Mammary epithelial cell (primary cell): ENCODE measurements at regions of chr1 and their contacts with region 1.

Region 1: GRCh38 chr1:178542560-178543356 is 29.8 kb downstream of the TEX35 start:
- DNase-seq: peak; percentile 76
- H3K4me3 ChIP-seq: peak overlapping the region; percentile 49 to 85 (median 71)
- H3K27ac ChIP-seq: peak overlapping the region; percentile 17
- H3K4me1 ChIP-seq: peaks cover 20% of the 10 kb centered on the region
- H3K27me3 ChIP-seq: no peaks in the 10 kb centered on the region
- CTCF ChIP-seq: peak; percentile 73 to 90

Region 2: DNA sequence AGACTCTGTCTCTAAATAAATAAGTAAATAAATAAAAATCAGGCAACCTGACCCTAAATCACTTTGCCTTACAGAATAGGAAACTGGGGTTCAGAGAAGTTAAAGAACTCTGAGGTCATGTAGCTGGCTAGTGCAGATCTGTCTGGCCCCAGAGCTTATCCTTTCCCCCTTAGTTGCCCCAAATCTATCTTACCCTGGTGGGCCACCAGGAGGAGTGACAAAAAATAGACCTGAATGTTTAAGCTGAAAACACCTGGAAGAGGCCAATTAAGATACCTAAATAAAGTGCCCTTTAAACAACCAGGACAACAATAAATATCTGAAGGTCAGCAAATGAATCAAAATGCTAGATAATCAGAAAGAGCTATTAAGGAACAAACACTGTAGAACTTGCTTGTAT is 29.8 kb after region 1 on chr1:
- CTCF ChIA-PET with region 1: interaction called, 12 read pairs
- dilution Hi-C with region 1: no loop called
- in situ Hi-C with region 1: no loop called
- intact Hi-C with region 1: no loop called
- DNase-seq: no peak
- H3K4me3 ChIP-seq: no peak overlapping the region
- H3K27ac ChIP-seq: no peak overlapping the region
- H3K4me1 ChIP-seq: no peaks in the 10 kb centered on the region
- H3K27me3 ChIP-seq: no peaks in the 10 kb centered on the region
- CTCF ChIP-seq: no peak

Region 3: DNA sequence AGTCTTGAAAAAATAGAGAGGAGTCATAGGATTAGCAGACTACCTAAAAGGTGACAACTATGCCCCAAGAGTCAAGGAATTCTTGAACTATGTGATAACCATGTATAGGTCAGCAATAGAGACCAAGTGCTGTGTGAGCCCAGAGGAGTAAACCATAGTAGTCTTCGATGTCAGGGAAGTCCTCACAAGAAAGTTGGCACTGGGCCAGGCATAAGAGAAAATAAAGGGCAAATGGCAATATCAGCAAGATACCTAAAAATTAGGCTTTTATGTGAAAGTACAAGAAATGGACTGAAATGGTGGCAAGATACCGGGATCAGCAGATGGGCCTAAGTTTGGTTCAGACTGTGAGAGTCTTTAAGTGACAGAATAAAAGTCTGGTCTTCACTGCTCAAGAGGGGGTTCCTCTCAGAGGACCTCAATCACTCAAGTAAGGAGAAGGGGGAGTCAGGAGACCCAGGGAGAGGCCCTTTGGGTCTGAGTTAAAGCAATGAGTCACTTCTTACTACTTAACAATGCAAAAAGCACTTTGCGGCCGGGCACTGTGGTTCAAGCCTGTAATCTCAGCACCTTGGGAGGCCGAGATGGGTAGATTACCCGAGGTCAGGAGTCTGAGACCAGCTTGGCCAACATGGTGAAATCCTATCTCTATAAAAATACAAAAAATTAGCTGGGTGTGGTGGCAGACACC is 65.1 kb after region 1 on chr1:
- CTCF ChIA-PET with region 1: interaction called, 3 read pairs
- dilution Hi-C with region 1: no loop called
- in situ Hi-C with region 1: no loop called
- intact Hi-C with region 1: loop called (anchors 1 kb)
- DNase-seq: no peak
- H3K4me3 ChIP-seq: no peak overlapping the region
- H3K27ac ChIP-seq: peak overlapping the region; percentile 85
- H3K4me1 ChIP-seq: peaks cover 46% of the 10 kb centered on the region
- H3K27me3 ChIP-seq: no peaks in the 10 kb centered on the region
- CTCF ChIP-seq: no peak

Region 4: DNA sequence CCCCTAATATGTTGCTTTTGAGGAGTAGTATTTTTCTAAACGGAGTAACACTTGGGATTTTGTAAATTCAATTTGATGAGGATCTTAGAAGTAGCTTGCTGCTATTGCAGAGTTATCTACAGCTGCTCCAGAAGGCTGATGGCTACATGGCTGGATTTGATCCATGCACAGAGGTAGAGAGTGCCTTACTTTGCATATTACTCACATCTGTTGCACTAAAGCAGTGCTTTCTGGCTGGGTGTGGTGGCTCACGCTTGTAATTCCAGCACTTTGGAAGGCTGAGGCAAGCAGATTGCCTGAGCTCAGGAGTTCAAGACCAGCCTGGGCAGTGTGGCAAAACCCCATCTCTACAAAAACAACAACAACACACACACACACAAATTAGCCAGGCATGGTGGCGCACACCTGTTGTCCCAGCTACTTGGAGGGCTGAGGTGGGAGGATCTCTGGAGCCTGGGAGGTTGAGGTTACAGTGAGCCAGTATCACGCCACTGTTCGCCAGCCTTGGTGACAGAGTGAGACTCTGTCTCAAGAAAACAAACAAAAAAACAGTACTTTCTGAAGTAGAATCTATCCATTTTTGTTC is 206.9 kb after region 1 on chr1:
- CTCF ChIA-PET with region 1: interaction called, 5 read pairs
- dilution Hi-C with region 1: no loop called
- in situ Hi-C with region 1: loop called in 1 of 2 experiments (anchors 10 kb)
- intact Hi-C with region 1: loop called (anchors 1 kb)
- DNase-seq: no peak
- H3K4me3 ChIP-seq: no peak overlapping the region
- H3K27ac ChIP-seq: no peak overlapping the region
- H3K4me1 ChIP-seq: no peaks in the 10 kb centered on the region
- H3K27me3 ChIP-seq: no peaks in the 10 kb centered on the region
- CTCF ChIP-seq: no peak